ENCODE measurements at regions of chr10 and their contacts with region 1.

Region 1: GRCh38 chr10:112471878-112472487 is 25.0 kb downstream of the VTI1A start:
- DNase-seq: no peak
- H3K4me3 Mint-ChIP-seq: no peak overlapping the region
- H3K27ac Mint-ChIP-seq: no peak overlapping the region
- H3K4me1 Mint-ChIP-seq: no peaks in the 10 kb centered on the region
- H3K27me3 Mint-ChIP-seq: no peaks in the 10 kb centered on the region
- CTCF ChIP-seq: peak; percentile 36

Region 2: DNA sequence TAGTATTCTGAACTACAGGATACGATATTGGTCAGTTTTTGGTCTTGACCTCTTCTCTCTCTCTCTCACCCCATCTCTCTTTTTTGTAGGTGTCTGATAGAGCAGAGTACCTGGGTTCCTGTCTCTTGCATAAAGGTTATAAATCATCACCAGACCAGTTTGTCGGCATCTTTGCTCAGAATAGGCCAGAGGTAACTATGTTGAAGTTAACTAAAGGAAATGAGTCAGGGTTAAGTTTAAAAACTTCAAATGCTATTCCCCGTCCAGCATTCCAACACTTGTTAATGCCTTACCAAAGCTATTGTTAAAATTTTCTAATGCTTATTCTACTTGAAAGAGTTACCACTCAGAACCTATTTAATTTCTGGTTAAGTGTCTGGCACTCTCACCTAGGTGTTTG is 67.4 kb before region 1 on chr10:
- CTCF ChIA-PET with region 1: no interaction called
- intact Hi-C with region 1: no loop called
- DNase-seq: peak; percentile 20
- H3K4me3 Mint-ChIP-seq: no peak overlapping the region
- H3K27ac Mint-ChIP-seq: peak overlapping the region; percentile 82
- H3K4me1 Mint-ChIP-seq: peaks cover 61% of the 10 kb centered on the region
- H3K27me3 Mint-ChIP-seq: no peaks in the 10 kb centered on the region
- CTCF ChIP-seq: no peak

Region 3: DNA sequence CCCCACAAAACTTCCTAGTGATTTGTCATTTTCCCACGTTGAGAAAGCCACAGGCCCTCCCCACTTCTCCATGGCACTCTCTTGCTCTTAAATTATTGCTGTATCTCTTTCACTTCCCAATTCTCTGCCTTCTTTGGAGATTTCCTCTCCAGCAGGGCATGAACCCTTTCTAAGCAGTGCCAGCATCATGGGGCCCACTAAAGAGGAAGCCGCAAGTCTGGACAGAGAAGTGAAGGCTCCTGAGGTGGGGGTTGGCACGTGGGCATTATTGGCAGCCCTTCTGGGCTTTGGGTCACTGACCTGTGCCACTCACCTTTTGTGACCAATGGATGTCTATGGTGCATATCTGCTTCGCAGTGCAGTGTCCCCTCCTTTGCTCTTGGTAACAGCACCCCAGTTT is 380.3 kb after region 1 on chr10:
- CTCF ChIA-PET with region 1: no interaction called
- intact Hi-C with region 1: no loop called
- DNase-seq: no peak
- H3K4me3 Mint-ChIP-seq: no peak overlapping the region
- H3K27ac Mint-ChIP-seq: no peak overlapping the region
- H3K4me1 Mint-ChIP-seq: peaks cover 26% of the 10 kb centered on the region
- H3K27me3 Mint-ChIP-seq: no peaks in the 10 kb centered on the region
- CTCF ChIP-seq: no peak

Region 4: GRCh38 chr10:113216102-113216501 is 744.1 kb after region 1 on chr10:
- CTCF ChIA-PET with region 1: no interaction called
- intact Hi-C with region 1: loop called (anchors 10 kb)
- DNase-seq: no peak
- H3K4me3 Mint-ChIP-seq: no peak overlapping the region
- H3K27ac Mint-ChIP-seq: no peak overlapping the region
- H3K4me1 Mint-ChIP-seq: no peaks in the 10 kb centered on the region
- H3K27me3 Mint-ChIP-seq: no peaks in the 10 kb centered on the region
- CTCF ChIP-seq: no peak

Region 5: GRCh38 chr10:113454341-113455061 is 982.5 kb after region 1 on chr10:
- CTCF ChIA-PET with region 1: no interaction called
- intact Hi-C with region 1: loop called (anchors 10 kb)
- DNase-seq: peak; percentile 35
- H3K4me3 Mint-ChIP-seq: no peak overlapping the region
- H3K27ac Mint-ChIP-seq: no peak overlapping the region
- H3K4me1 Mint-ChIP-seq: peaks cover 9% of the 10 kb centered on the region
- H3K27me3 Mint-ChIP-seq: peaks cover 79% of the 10 kb centered on the region
- CTCF ChIP-seq: peak; percentile 57

Region 6: GRCh38 chr10:113521123-113521795 is 1049.3 kb after region 1 on chr10:
- CTCF ChIA-PET with region 1: no interaction called
- intact Hi-C with region 1: loop called (anchors 5 kb)
- DNase-seq: peak; percentile 54
- H3K4me3 Mint-ChIP-seq: no peak overlapping the region
- H3K27ac Mint-ChIP-seq: no peak overlapping the region
- H3K4me1 Mint-ChIP-seq: no peaks in the 10 kb centered on the region
- H3K27me3 Mint-ChIP-seq: peaks cover 52% of the 10 kb centered on the region
- CTCF ChIP-seq: peak; percentile 71

Region 7: GRCh38 chr10:113563306-113564088 is 1091.5 kb after region 1 on chr10:
- CTCF ChIA-PET with region 1: no interaction called
- intact Hi-C with region 1: loop called (anchors 5 kb)
- DNase-seq: peak; percentile 73
- H3K4me3 Mint-ChIP-seq: peak overlapping the region; percentile 73
- H3K27ac Mint-ChIP-seq: no peak overlapping the region
- H3K4me1 Mint-ChIP-seq: peaks cover 8% of the 10 kb centered on the region
- H3K27me3 Mint-ChIP-seq: peaks cover 58% of the 10 kb centered on the region
- CTCF ChIP-seq: peak; percentile 89

Measured in Calu3 (cell line).